ENCODE measurements at regions of chr17 and their contacts with region 1.

Region 1: GRCh38 chr17:48413613-48414405 is 16.2 kb downstream of the SKAP1 start:
- DNase-seq: no peak
- H3K4me3 Mint-ChIP-seq: peak overlapping the region; percentile 55
- H3K27ac Mint-ChIP-seq: peak overlapping the region; percentile 78
- H3K4me1 Mint-ChIP-seq: peaks cover 66% of the 10 kb centered on the region
- H3K27me3 Mint-ChIP-seq: no peaks in the 10 kb centered on the region

Region 2: GRCh38 chr17:48392857-48393256 is 21.0 kb before region 1 on chr17:
- intact Hi-C with region 1: loop called (anchors 2 kb)
- DNase-seq: no peak
- H3K4me3 Mint-ChIP-seq: no peak overlapping the region
- H3K27ac Mint-ChIP-seq: no peak overlapping the region
- H3K4me1 Mint-ChIP-seq: peaks cover 23% of the 10 kb centered on the region
- H3K27me3 Mint-ChIP-seq: no peaks in the 10 kb centered on the region

Region 3: GRCh38 chr17:48441231-48441711 is 27.5 kb after region 1 on chr17:
- intact Hi-C with region 1: loop called (anchors 1 kb)
- DNase-seq: peak; percentile 86
- H3K4me3 Mint-ChIP-seq: peak overlapping the region; percentile 51
- H3K27ac Mint-ChIP-seq: peak overlapping the region; percentile 95
- H3K4me1 Mint-ChIP-seq: peaks cover 83% of the 10 kb centered on the region
- H3K27me3 Mint-ChIP-seq: no peaks in the 10 kb centered on the region

Region 4: DNA sequence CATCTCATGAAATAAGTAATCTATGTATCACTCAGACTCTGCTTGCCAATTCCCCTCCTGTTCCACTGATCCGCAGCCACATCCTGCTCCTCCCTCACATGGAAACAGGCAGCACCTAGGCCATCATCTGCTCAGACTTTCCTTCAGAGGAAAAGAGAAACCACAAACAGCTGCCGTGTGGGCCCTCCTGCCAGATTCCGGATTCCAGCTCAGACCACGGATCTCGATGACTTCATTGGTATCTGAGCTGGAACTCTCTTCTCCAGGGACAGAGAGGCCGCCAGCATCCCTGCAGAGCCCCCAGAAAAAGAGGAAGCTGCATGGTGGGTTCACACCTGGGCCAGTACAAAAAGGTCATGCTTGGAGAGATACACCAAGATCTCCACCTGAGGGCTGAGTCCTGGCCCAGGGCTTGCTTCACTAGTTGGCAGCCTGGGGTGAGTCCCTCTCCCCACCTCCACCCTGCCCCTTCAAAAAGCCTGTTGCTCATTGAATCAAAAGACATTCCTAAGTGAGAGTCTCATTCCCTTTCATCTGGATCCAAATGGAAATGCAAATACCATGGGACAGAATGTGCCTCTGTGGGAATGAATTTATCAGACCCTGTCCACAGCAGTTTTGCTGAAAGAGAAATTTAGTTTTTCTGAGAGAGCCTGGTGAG is 69.8 kb after region 1 on chr17:
- intact Hi-C with region 1: loop called (anchors 2 kb)
- DNase-seq: peak; percentile 83
- H3K4me3 Mint-ChIP-seq: peak overlapping the region; percentile 51
- H3K27ac Mint-ChIP-seq: peak overlapping the region; percentile 63
- H3K4me1 Mint-ChIP-seq: peaks cover 34% of the 10 kb centered on the region
- H3K27me3 Mint-ChIP-seq: no peaks in the 10 kb centered on the region